ENCODE measurements at regions of chr2 and their contacts with region 1.

Region 1: GRCh38 chr2:37877457-37878315 is 47.4 kb upstream of the RMDN2 start:
- DNase-seq: peak; percentile 32
- ATAC-seq: peak; percentile 84
- H3K4me3 ChIP-seq: no peak overlapping the region
- H3K27ac ChIP-seq: no peak overlapping the region
- H3K4me1 ChIP-seq: no peaks in the 10 kb centered on the region
- H3K27me3 ChIP-seq: peaks cover 4% of the 10 kb centered on the region; the same call in 1 of the 2 replicates
- CTCF ChIP-seq: peak; percentile 74; the same call in 1 of the 2 replicates

Region 2: DNA sequence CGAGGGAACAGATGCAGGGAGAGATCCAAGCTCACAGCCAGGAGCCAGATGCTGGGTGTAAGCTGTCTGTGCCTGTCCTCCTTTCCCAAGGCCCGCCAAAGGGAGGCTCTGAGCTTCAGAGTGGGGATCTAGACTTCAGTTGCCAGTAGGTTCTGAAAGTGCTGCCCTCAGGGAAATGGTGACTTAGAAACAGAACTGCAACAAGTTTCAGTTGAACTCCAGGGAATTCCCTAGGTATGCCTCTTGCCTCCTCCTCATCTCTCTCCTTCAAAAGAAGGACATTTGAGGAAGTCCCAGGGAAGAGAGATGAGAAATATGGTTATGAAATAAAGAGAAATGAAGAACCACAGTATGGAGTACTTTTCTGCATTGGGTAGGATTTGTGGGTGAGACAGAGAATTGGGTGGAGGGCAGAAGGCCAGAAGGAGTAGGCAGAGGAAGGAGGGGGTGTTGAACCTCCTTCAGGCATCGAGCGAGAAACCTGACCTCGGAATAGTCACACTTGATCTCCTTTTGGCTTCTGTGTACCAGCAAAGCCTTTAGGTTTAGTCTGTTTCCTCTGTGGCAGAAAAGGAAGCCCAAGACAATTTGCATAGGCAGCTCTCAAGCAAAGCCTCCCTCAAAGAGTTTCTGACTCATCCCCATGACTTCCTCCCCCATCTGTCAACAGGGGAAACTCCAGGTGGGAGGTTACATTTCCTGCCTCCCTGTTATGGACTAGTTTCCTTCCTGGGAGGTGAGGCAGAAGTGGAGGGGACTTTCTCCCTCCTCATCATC is 487.5 kb before region 1 on chr2:
- CTCF ChIA-PET with region 1: interaction called, 38 read pairs
- POLR2A ChIA-PET with region 1: no interaction called
- in situ Hi-C with region 1: no loop called
- intact Hi-C with region 1: no loop called
- DNase-seq: no peak
- ATAC-seq: peak; percentile 84
- H3K4me3 ChIP-seq: no peak overlapping the region
- H3K27ac ChIP-seq: no peak overlapping the region
- H3K4me1 ChIP-seq: no peaks in the 10 kb centered on the region
- H3K27me3 ChIP-seq: no peaks in the 10 kb centered on the region
- CTCF ChIP-seq: no peak

Region 3: GRCh38 chr2:37397166-37397565 is 480.5 kb before region 1 on chr2:
- CTCF ChIA-PET with region 1: interaction called, 38 read pairs
- POLR2A ChIA-PET with region 1: no interaction called
- in situ Hi-C with region 1: no loop called
- intact Hi-C with region 1: loop called (anchors 2 kb)
- DNase-seq: no peak
- ATAC-seq: 0 out of 2 replicates have a peak, but pooled peaks have one; percentile 62
- H3K4me3 ChIP-seq: no peak overlapping the region
- H3K27ac ChIP-seq: no peak overlapping the region
- H3K4me1 ChIP-seq: no peaks in the 10 kb centered on the region
- H3K27me3 ChIP-seq: peaks cover 3% of the 10 kb centered on the region; the same call in 1 of the 2 replicates
- CTCF ChIP-seq: no peak

Region 4: GRCh38 chr2:38522754-38523349 is 645.2 kb after region 1 on chr2:
- CTCF ChIA-PET with region 1: interaction called, 12 read pairs
- POLR2A ChIA-PET with region 1: no interaction called
- in situ Hi-C with region 1: no loop called
- intact Hi-C with region 1: no loop called
- DNase-seq: no peak
- ATAC-seq: no peak
- H3K4me3 ChIP-seq: no peak overlapping the region
- H3K27ac ChIP-seq: no peak overlapping the region
- H3K4me1 ChIP-seq: no peaks in the 10 kb centered on the region
- H3K27me3 ChIP-seq: no peaks in the 10 kb centered on the region
- CTCF ChIP-seq: no peak

Measured in Panc1 (cell line).